Head of caudate nucleus (tissue), 42 donors: ENCODE measurements at regions of chr4 and their contacts with region 1.

Region 1: GRCh38 chr4:113394730-113395530 is 345.5 kb downstream of the ANK2 start:
- DNase-seq: peak in 32 of 42 donors; percentile 2 to 89 (median 62)

Region 2: DNA sequence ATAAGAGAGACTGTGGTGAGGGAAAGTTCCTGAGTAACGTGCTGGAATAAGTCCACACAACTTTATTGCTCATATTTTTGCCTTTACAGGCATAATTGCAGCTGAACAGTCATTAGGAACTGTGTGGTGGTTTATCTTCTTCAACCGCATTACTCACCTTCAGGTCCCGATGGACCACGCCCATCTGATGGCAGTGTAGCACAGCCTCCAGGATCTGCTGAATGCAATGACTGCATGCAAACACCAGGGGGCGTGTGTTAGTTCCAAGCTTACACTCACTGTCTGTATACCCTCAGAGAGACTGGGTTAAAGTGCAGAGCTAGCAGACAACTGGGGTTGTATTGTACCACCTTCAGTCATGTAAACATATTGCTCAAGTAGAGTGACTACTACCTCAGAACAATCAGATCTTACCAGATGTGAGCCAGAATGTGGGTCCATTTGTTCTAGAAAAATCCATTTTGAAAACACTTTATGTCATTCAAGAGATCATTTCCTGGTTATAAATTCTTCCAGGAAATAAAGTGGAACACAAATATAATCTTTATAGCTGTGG is 152.6 kb after region 1 on chr4:
- intact Hi-C with region 1: loop called (anchors 10 kb)
- DNase-seq: peak; percentile 69 to 94 (median 86)

Region 3: DNA sequence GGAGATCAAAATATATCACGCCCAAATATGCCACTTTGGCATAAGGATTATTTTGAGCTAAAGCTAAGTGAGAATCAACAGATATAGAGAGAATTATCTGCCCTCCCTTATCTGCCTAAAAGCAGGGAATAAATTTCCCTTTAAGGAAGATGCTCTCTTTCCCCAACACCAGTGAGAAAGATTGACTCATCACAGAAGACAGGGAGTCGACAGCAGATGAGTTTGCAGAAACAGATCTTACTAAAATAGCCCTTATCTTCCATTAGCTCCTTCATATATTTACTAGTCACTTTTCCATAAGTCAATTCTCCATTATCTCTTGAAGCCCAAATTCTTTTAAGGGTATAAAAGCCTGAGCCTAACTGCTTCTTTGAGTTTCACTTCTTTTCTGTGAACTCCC is 210.0 kb after region 1 on chr4:
- intact Hi-C with region 1: no loop called
- DNase-seq: no peak

Region 4: DNA sequence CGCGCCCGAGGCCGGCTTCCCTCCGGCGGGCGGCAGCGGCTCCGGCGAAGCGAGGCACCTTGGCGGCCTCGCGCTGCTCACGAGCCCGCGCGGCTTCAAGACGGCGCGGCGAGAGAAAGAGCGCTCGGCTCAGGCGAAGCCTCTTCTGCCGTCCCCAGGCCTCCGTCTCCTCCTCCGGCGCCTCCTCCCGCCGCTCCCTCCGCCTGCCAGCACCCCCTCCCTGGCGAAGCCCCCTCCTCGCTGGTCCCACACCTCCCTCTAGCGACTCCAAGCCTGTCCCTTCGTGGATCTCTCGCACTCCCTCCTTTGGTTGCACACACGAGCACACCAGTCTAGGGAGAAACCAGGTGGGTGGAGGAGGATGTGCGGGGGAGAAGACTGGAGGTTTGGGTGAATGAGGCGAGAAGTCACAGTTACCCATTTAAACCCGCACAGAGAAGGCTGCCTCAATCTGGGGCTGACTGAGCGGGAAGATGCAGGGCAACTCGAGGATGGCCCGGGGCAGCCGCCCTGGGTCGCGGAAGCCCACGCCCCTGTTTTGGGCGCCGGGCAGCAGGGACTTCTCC is 366.8 kb after region 1 on chr4 and contains the start of gene CAMK2D:
- intact Hi-C with region 1: loop called (anchors 5 kb)
- DNase-seq: peak; percentile 69 to 96 (median 89)

Region 5: DNA sequence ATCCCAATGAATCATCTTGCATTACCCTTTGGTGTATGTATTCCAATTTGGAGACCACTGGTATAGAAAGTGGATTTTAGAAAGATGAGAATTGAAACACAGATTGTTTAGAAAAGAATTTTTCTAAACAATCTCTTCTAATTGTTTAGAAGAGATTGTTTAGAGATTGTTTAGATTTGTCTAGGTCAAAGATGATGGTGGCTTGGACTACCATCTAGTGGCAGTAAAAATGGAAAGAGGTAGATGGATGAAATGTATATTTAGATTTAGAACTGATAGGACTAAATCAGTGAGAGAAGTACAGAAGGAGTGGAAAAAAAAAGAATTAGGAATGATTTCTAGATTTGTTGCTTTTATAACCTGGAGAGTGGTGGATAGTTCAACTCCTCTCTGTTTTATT is 513.9 kb after region 1 on chr4:
- intact Hi-C with region 1: loop called (anchors 5 kb)
- DNase-seq: no peak

Region 6: DNA sequence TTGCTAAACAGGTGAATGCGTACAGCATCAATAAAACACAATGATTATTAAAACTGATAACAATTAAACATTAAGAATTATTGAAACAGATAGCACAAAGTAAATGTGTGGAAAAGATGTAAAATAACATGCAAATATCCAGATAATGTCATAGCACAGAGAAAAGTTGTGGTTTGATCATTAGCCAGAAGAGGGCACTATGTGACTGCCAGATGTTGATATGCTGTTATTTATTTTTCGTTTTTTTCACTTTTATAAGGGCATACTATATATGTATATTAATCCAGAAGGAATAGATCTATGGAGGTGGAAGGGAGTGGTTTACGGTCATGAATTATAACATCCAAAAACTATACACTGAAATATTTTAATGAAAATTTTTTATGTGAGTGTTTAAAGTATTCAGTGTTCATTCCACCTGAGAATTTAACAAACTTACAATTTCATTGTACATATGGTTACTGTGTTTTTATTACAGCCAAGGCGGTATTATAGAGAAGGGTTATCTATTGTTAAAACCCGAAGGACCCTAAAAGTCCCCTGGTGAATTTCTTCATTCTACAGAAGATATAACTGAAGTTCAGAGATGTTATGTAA is 991.8 kb after region 1 on chr4:
- intact Hi-C with region 1: loop called (anchors 5 kb)
- DNase-seq: peak in 10 of 42 donors; percentile 7 to 71 (median 34)

Region 7: DNA sequence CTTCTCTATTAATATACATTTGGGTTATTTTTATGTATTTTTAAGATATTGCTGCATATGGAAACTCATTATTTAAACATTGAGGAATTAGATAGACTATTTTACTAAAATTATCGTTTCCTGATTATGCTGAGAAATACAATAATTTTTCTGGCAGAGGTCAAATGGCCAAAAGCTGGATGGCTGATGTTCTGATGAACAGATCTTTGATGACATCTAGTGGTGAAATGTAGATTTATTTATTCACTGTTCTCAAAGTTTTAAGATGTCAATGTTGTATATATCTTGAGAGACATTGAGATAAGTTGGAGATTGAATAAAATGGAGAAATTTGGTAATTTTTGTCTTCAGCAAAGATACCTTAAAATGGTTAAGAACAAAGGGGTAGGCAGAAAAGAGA is 1299.8 kb after region 1 on chr4:
- intact Hi-C with region 1: loop called (anchors 10 kb)
- DNase-seq: peak in 1 of 42 donors; percentile 37